Mucosa of descending colon (tissue), 3 donors: ENCODE measurements at regions of chr13 and their contacts with region 1.

Region 1: GRCh38 chr13:50081679-50082425 is 66.6 kb downstream of the KCNRG start:
- DNase-seq: peak; percentile 98 to 99 (median 99)
- ATAC-seq: peak; percentile 90
- H3K4me3 ChIP-seq: peak overlapping the region; percentile 62
- H3K4me1 ChIP-seq: peaks cover 6% of the 10 kb centered on the region
- CTCF ChIP-seq: no peak

Region 2: DNA sequence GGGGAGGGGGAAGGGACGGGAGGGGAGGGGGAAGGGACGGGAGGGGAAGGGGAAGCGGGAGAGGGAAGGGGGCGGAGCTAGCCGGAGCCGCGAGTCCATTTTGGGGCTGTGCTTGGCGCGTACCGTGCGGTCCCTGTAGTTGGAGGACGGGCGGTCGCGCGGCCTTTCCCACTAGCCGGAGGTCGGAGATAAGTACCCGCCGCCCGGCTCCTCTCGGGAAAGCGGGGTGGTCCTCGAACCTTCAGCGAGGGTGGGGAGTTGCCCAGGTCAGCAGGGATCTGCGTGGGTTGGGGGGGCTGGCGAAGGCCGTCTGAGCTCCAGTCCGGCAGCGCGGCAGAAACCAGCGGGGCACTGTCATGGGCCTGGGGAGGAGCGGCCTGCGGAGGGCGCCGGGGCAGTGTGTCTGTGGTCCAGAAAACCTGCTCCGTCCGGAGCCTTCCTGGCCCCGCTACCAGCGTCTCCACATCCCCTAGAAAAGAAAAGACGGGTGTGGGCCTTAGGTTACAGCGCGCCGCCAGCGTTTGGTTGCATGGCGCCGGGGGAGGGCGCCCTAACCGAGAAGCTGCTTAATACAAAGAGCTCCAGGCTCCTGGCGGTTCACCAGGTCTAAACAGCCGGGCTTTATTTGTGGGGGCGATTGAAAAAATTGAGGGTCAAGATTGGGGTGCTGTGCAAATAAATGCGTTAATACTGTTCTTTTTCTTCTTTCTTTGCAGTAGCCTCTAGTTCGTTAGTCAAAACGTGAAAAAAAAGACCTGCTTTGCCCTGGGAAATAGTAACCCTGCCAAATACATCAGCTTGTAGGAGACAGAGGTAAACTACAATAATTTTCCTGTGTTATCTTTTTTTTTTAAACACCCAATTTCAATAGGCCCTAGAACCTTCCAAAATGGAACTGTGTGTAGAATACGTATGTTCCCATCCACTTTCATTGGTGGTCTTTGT is 84.6 kb before region 1 on chr13 and contains the start of gene TRIM13:
- intact Hi-C with region 1: loop called in 1 of 2 experiments (anchors 10 kb)
- DNase-seq: peak; percentile 93 to 95 (median 93)
- ATAC-seq: peak; percentile 86
- H3K4me3 ChIP-seq: peak within 1 kb of the TSS; percentile 73
- H3K4me1 ChIP-seq: peaks cover 36% of the 10 kb centered on the region
- CTCF ChIP-seq: peak; percentile 61
- total RNA-seq, gene TRIM13: 31.6 to 35.5 (median 32.7) TPM

Region 3: DNA sequence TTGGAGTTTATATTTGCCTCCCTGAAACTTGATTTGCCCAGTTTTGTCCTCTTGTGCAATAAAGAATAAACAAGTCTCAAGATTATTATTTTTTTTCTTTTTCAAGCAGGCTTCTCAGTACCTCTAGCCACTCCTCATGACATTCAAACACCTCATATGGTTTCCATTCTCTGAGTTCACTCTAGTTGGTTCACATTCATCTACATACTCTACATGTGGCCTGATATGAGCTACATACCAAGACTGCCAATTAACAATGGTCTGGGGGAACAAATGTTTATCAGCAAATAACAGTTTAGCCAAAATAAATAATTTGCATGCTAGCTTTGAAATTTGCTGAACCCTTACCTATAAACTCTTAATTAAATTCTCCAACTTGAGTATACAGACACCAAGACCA is 44.1 kb before region 1 on chr13:
- intact Hi-C with region 1: no loop called
- DNase-seq: no peak
- ATAC-seq: no peak
- H3K4me3 ChIP-seq: no peak overlapping the region
- H3K4me1 ChIP-seq: no peaks in the 10 kb centered on the region
- CTCF ChIP-seq: no peak

Region 4: DNA sequence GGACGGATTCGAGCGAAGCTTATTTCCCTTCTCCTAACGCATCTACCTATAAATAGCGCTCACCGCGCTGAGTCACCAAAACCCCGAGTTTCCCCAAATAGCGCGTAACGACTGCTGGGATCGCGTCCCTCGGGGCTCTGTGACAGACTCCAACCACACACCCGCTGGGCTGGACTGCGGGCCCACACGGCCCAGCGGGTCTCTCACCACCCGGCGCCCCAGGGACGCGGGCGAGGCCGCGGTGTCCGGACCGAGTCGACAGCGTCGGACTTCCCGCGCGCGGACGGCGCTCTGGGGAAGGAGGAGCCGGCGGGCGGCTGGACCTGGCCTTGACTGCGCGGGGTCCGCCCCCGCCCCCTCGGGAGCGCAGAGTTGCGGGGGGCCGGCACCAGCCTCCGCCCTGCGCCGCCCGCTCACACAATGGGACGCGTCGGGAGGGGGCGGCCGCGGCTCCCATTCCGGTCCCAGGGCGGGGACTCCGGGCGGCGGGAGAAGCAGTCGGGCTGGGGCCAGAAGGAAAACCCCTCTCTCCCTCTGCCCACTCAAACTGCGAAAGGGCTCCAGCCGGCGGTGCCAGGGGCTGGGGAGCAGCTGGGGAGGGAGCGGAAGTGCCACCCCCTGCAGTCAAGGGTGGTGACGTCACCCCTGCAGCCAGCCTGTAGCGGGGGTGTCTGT is 42.1 kb after region 1 on chr13:
- intact Hi-C with region 1: loop called (anchors 5 kb)
- DNase-seq: peak; percentile 76 to 95 (median 84)
- ATAC-seq: peak; percentile 80
- H3K4me3 ChIP-seq: peak overlapping the region; percentile 91
- H3K4me1 ChIP-seq: peaks cover 15% of the 10 kb centered on the region
- CTCF ChIP-seq: no peak

Region 5: GRCh38 chr13:50531917-50532899 is 450.4 kb after region 1 on chr13:
- intact Hi-C with region 1: loop called in 1 of 2 experiments (anchors 10 kb)
- DNase-seq: peak in 1 of 3 donors; percentile 55
- ATAC-seq: no peak
- H3K4me3 ChIP-seq: no peak overlapping the region
- H3K4me1 ChIP-seq: peaks cover 14% of the 10 kb centered on the region
- CTCF ChIP-seq: no peak